ENCODE measurements at regions of chr17 and their contacts with region 1.

Region 1: GRCh38 chr17:68057531-68057952 is 22.0 kb downstream of the KPNA2 start:
- DNase-seq: peak; percentile 39
- H3K4me3 ChIP-seq: no peak overlapping the region
- H3K27ac ChIP-seq: no peak overlapping the region
- H3K4me1 ChIP-seq: peaks cover 24% of the 10 kb centered on the region
- H3K27me3 ChIP-seq: no peaks in the 10 kb centered on the region
- CTCF ChIP-seq: peak; percentile 56

Region 2: GRCh38 chr17:68205251-68205807 is 147.8 kb after region 1 on chr17:
- CTCF ChIA-PET with region 1: no interaction called
- POLR2A ChIA-PET with region 1: no interaction called
- intact Hi-C with region 1: loop called (anchors 10 kb)
- DNase-seq: peak; percentile 95
- H3K4me3 ChIP-seq: peak overlapping the region; percentile 80
- H3K27ac ChIP-seq: peak overlapping the region; percentile 48
- H3K4me1 ChIP-seq: peaks cover 8% of the 10 kb centered on the region
- H3K27me3 ChIP-seq: peaks cover 4% of the 10 kb centered on the region
- CTCF ChIP-seq: peak; percentile 78

Region 3: DNA sequence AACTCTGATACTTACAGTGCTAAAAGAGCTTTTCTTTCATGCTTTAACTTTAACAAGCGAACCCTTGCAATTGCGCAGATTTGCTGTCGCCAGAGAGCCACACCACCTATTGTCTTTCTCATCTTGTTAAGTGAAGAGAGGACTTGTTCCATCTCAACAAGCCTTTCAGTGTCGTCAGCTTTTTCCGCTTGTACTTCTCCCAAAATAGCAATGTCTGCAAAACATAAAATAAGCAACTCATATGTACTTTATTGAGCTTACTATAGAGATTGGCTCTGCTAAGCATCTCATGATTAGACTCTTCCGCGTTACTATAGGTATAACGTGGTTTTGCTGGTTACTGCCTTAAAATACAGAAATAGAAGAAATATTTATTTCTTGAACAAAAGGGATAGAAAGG is 845.7 kb after region 1 on chr17:
- CTCF ChIA-PET with region 1: interaction called, 3 read pairs
- POLR2A ChIA-PET with region 1: interaction called, 16 read pairs
- intact Hi-C with region 1: no loop called
- DNase-seq: no peak
- H3K4me3 ChIP-seq: no peak overlapping the region
- H3K27ac ChIP-seq: no peak overlapping the region
- H3K4me1 ChIP-seq: no peaks in the 10 kb centered on the region
- H3K27me3 ChIP-seq: no peaks in the 10 kb centered on the region
- CTCF ChIP-seq: no peak